IMR-90 (cell line): ENCODE measurements at regions of chr6 and their contacts with region 1.

Region 1: GRCh38 chr6:25788305-25788922 is 33.9 kb downstream of the SLC17A4 start:
- DNase-seq: peak; percentile 51
- ATAC-seq: peak; percentile 77
- H3K4me3 ChIP-seq: no peak overlapping the region
- H3K27ac ChIP-seq: no peak overlapping the region
- H3K4me1 ChIP-seq: no peaks in the 10 kb centered on the region
- H3K27me3 ChIP-seq: no peaks in the 10 kb centered on the region
- CTCF ChIP-seq: peak; percentile 56
- POLR2A ChIP-seq: no peak
- RAD21 ChIP-seq: peak; percentile 61

Region 2: GRCh38 chr6:25889877-25890853 is 101.8 kb after region 1 on chr6:
- CTCF ChIA-PET with region 1: interaction called, 3 read pairs
- POLR2A ChIA-PET with region 1: no interaction called
- dilution Hi-C with region 1: no loop called
- in situ Hi-C with region 1: no loop called
- intact Hi-C with region 1: loop called (anchors 1 kb)
- DNase-seq: peak; percentile 17
- ATAC-seq: peak; percentile 60
- H3K4me3 ChIP-seq: no peak overlapping the region
- H3K27ac ChIP-seq: no peak overlapping the region
- H3K4me1 ChIP-seq: no peaks in the 10 kb centered on the region
- H3K27me3 ChIP-seq: no peaks in the 10 kb centered on the region
- CTCF ChIP-seq: peak; percentile 38
- POLR2A ChIP-seq: no peak
- RAD21 ChIP-seq: peak; percentile 52

Region 3: DNA sequence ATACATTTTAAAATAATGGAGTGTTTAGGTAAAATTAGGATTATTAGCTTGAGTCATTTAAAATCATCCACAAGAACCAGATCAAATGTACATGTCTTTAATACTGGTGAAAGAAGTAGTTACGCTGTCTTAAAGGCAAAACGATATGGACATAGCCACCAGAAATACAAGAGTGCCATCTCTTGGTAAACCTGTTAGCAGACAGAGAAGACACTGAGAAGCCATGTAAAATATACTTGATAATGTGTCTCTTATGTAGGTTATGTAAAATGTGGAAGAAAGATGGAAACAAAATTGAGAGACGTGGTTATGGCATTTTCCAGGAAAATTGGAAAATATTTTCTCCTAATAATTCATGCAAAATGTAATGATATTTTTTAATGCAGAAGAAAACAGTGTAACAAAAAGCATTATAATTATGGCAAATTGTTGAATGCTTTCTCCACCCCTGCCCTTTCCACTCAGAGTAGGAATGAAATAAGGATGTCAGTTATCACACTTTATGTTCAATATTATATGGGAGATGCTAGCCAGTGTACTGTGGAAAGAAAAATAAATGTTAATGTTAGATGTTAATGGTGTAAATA is 154.2 kb after region 1 on chr6:
- CTCF ChIA-PET with region 1: no interaction called
- POLR2A ChIA-PET with region 1: no interaction called
- dilution Hi-C with region 1: no loop called
- in situ Hi-C with region 1: no loop called
- intact Hi-C with region 1: loop called (anchors 1 kb)
- DNase-seq: peak; percentile 55
- ATAC-seq: peak; percentile 64
- H3K4me3 ChIP-seq: no peak overlapping the region
- H3K27ac ChIP-seq: no peak overlapping the region
- H3K4me1 ChIP-seq: no peaks in the 10 kb centered on the region
- H3K27me3 ChIP-seq: no peaks in the 10 kb centered on the region; the same call in 1 of the 2 replicates
- CTCF ChIP-seq: peak; percentile 69
- POLR2A ChIP-seq: no peak
- RAD21 ChIP-seq: peak; percentile 76

Region 4: GRCh38 chr6:26003102-26003694 is 214.8 kb after region 1 on chr6:
- CTCF ChIA-PET with region 1: interaction called, 3 read pairs
- POLR2A ChIA-PET with region 1: no interaction called
- dilution Hi-C with region 1: no loop called
- in situ Hi-C with region 1: no loop called
- intact Hi-C with region 1: loop called (anchors 2 kb)
- DNase-seq: peak; percentile 56
- ATAC-seq: peak; percentile 84
- H3K4me3 ChIP-seq: no peak overlapping the region
- H3K27ac ChIP-seq: no peak overlapping the region
- H3K4me1 ChIP-seq: 0 out of 2 replicates have a peak, but pooled peaks cover 1% of the 10 kb centered on the region
- H3K27me3 ChIP-seq: no peaks in the 10 kb centered on the region
- CTCF ChIP-seq: peak; percentile 78
- POLR2A ChIP-seq: no peak
- RAD21 ChIP-seq: peak; percentile 79

Region 5: GRCh38 chr6:27679308-27679963 is 1891.0 kb after region 1 on chr6:
- CTCF ChIA-PET with region 1: no interaction called
- POLR2A ChIA-PET with region 1: no interaction called
- dilution Hi-C with region 1: no loop called
- in situ Hi-C with region 1: no loop called
- intact Hi-C with region 1: no loop called
- DNase-seq: no peak
- ATAC-seq: no peak
- H3K4me3 ChIP-seq: peak overlapping the region; percentile 34; the same call in 1 of the 2 replicates
- H3K27ac ChIP-seq: no peak overlapping the region
- H3K4me1 ChIP-seq: no peaks in the 10 kb centered on the region
- H3K27me3 ChIP-seq: peaks cover 10% of the 10 kb centered on the region
- CTCF ChIP-seq: no peak
- POLR2A ChIP-seq: no peak
- RAD21 ChIP-seq: no peak